ENCODE measurements at regions of chr1 and their contacts with region 1.

Region 1: GRCh38 chr1:42777852-42778251 is 6.9 kb upstream of the TMEM269 start:
- DNase-seq: peak in 5 of 9 experiments; percentile 21 to 52 (median 27)
- ATAC-seq: peak; percentile 68
- H3K4me3 ChIP-seq: no peak overlapping the region
- H3K4me3 Mint-ChIP-seq: no peak overlapping the region
- H3K27ac ChIP-seq: no peak overlapping the region
- H3K27ac Mint-ChIP-seq: no peak overlapping the region
- H3K4me1 ChIP-seq: no peaks in the 10 kb centered on the region
- H3K4me1 Mint-ChIP-seq: peaks cover 10% of the 10 kb centered on the region
- H3K27me3 ChIP-seq: no peaks in the 10 kb centered on the region
- H3K27me3 Mint-ChIP-seq: no peaks in the 10 kb centered on the region
- CTCF ChIP-seq: peak; percentile 57

Region 2: DNA sequence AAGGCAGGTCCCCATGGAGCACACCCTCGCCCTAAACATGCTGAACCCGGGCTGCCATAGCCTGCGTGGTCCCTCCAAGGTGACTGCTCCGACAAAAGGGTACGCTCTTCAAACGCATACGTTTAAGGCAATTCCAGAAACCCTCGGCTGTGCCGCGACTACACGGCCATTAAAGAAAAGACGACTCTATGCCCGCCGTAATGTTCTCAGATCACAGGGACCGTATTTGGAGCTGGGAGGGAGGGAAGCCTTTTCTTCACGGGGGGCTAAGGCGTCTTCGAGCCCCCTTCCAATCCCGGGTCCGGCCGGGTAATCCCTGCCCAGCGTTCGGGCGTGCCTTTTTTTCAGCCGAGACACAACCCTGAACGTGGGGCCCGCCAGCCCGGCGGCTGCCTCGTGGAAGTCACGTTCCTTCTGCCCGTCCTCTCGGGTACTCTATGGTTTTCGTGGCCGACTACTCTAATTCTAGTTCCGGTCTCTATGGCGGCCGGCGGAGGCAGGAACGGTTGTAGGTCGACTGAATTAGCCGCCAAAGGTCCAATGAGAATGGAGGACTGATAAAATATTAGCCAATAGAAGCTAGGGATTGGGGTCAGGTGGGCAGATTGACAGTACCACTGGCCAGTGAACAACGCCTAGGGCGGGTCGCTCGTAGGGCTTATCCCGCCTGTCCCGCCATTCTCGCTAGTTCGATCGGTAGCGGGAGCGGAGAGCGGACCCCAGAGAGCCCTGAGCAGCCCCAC is 95.9 kb before region 1 on chr1 and contains the start of gene YBX1:
- CTCF ChIA-PET with region 1: no interaction called
- POLR2A ChIA-PET with region 1: no interaction called
- intact Hi-C with region 1: no loop called
- DNase-seq: peak; percentile 88 to 98 (median 95)
- ATAC-seq: peak; percentile 89
- H3K4me3 ChIP-seq: peak within 1 kb of the TSS; percentile 81 to 84
- H3K4me3 Mint-ChIP-seq: peak within 1 kb of the TSS; percentile 99
- H3K27ac ChIP-seq: peak within 1 kb of the TSS; percentile 82 to 88
- H3K27ac Mint-ChIP-seq: peak within 1 kb of the TSS; percentile 97
- H3K4me1 ChIP-seq: peaks cover 43% of the 10 kb centered on the region
- H3K4me1 Mint-ChIP-seq: peaks cover 58% of the 10 kb centered on the region
- H3K27me3 ChIP-seq: no peaks in the 10 kb centered on the region
- H3K27me3 Mint-ChIP-seq: no peaks in the 10 kb centered on the region
- CTCF ChIP-seq: no peak
- total RNA-seq, gene YBX1: 440 to 450 TPM

Region 3: GRCh38 chr1:42756956-42757891 is 20.6 kb before region 1 on chr1:
- CTCF ChIA-PET with region 1: interaction called, 11 read pairs
- POLR2A ChIA-PET with region 1: no interaction called
- intact Hi-C with region 1: no loop called
- DNase-seq: peak in 2 of 9 experiments; percentile 47 to 57
- ATAC-seq: peak; percentile 59
- H3K4me3 ChIP-seq: no peak overlapping the region
- H3K4me3 Mint-ChIP-seq: no peak overlapping the region
- H3K27ac ChIP-seq: no peak overlapping the region
- H3K27ac Mint-ChIP-seq: peak overlapping the region; percentile 37
- H3K4me1 ChIP-seq: no peaks in the 10 kb centered on the region
- H3K4me1 Mint-ChIP-seq: no peaks in the 10 kb centered on the region
- H3K27me3 ChIP-seq: no peaks in the 10 kb centered on the region
- H3K27me3 Mint-ChIP-seq: no peaks in the 10 kb centered on the region
- CTCF ChIP-seq: peak; percentile 52

Region 4: GRCh38 chr1:43035821-43036741 is 258.2 kb after region 1 on chr1:
- CTCF ChIA-PET with region 1: no interaction called
- POLR2A ChIA-PET with region 1: no interaction called
- intact Hi-C with region 1: no loop called
- DNase-seq: no peak
- ATAC-seq: no peak
- H3K4me3 ChIP-seq: no peak overlapping the region
- H3K4me3 Mint-ChIP-seq: no peak overlapping the region
- H3K27ac ChIP-seq: peak overlapping the region in 1 of 2 experiments; percentile 77
- H3K27ac Mint-ChIP-seq: peak overlapping the region; percentile 22
- H3K4me1 ChIP-seq: peaks cover 20% of the 10 kb centered on the region
- H3K4me1 Mint-ChIP-seq: peaks cover 17% of the 10 kb centered on the region
- H3K27me3 ChIP-seq: no peaks in the 10 kb centered on the region
- H3K27me3 Mint-ChIP-seq: no peaks in the 10 kb centered on the region
- CTCF ChIP-seq: no peak

Measured in CD8-positive, alpha-beta T cell (primary cell).